ENCODE measurements at regions of chr1 and their contacts with region 1.

Region 1: DNA sequence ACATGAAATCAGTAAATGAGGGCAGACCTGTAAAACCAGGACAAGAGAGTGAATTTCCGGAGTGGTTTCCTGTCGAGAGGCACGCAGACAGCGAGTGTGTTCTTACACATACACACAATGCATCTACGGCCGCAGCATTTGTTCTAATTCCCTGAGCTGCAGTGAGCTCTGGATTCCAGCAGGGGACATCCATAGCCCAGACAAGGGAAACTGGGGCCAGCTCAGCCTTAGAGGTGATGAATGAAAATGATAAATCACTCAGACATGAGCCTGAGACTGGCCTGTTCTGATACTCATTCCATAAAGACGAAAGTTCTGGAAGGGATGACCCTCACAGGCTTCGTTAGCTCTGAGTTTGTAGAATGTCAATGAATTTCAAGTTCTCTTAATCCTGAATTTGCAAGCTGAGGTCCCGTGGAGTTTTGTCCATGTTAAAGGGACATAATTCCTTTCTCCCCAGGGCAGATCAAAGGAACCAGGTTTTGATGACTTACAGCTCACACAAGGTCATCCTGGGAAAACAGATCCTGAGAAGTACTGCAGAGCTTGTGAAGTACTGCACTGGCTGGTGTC is 207.9 kb upstream of the C1orf87 start:
- DNase-seq: peak; percentile 92
- H3K4me3 ChIP-seq: no peak overlapping the region
- H3K27ac ChIP-seq: peak overlapping the region; percentile 74
- H3K4me1 ChIP-seq: peaks cover 40% of the 10 kb centered on the region
- H3K27me3 ChIP-seq: no peaks in the 10 kb centered on the region
- CTCF ChIP-seq: peak; percentile 92 to 98
- POLR2A ChIP-seq: no peak

Region 2: DNA sequence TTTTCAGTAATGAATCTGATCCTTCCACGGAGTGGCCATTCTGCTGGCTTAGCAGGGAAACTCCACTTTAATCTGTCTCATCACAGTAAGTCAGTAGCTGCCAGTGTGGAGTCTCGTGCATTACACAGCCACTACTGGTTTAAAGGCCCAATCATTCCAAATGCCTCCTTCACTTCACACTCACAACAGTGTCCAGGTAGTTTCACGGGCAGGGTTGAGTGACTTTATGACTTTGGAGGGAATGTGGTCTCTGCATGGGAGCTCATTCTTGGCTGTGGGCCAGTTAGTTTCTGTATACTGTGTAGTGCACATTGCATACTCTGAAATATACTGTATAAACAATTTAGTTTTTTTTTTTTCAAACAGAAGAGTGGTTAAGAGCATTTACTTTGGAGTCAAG is 173.2 kb before region 1 on chr1:
- CTCF ChIA-PET with region 1: no interaction called
- POLR2A ChIA-PET with region 1: no interaction called
- dilution Hi-C with region 1: no loop called
- intact Hi-C with region 1: no loop called
- DNase-seq: no peak
- H3K4me3 ChIP-seq: no peak overlapping the region
- H3K27ac ChIP-seq: no peak overlapping the region
- H3K4me1 ChIP-seq: no peaks in the 10 kb centered on the region
- H3K27me3 ChIP-seq: no peaks in the 10 kb centered on the region
- CTCF ChIP-seq: no peak
- POLR2A ChIP-seq: no peak

Region 3: GRCh38 chr1:60160141-60160540 is 121.3 kb before region 1 on chr1:
- CTCF ChIA-PET with region 1: interaction called, 10 read pairs
- POLR2A ChIA-PET with region 1: no interaction called
- dilution Hi-C with region 1: no loop called
- intact Hi-C with region 1: loop called (anchors 1 kb)
- DNase-seq: no peak
- H3K4me3 ChIP-seq: no peak overlapping the region
- H3K27ac ChIP-seq: no peak overlapping the region
- H3K4me1 ChIP-seq: no peaks in the 10 kb centered on the region
- H3K27me3 ChIP-seq: no peaks in the 10 kb centered on the region
- CTCF ChIP-seq: no peak
- POLR2A ChIP-seq: no peak

Region 4: DNA sequence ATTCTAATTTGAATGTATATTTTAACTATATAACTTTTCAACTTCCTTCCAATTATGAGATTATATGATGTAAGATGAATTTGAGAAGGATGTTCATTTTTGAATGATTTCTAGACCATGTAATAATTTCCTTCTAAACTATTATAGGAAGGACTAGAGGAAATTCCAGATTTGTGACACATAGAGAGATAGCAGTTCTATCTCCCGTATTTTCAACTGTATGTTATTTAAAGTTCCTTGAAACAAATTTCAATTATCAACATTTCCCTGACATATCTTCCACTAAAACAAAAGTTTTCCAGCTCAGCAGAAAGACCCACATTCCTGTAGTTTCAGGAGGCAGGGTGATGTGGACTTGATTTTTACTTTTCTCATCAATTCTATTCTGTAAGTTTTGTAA is 188.8 kb after region 1 on chr1:
- CTCF ChIA-PET with region 1: interaction called, 3 read pairs
- POLR2A ChIA-PET with region 1: no interaction called
- dilution Hi-C with region 1: no loop called
- intact Hi-C with region 1: loop called (anchors 2 kb)
- DNase-seq: peak; percentile 66
- H3K4me3 ChIP-seq: no peak overlapping the region
- H3K27ac ChIP-seq: peak overlapping the region; percentile 82
- H3K4me1 ChIP-seq: peaks cover 27% of the 10 kb centered on the region
- H3K27me3 ChIP-seq: no peaks in the 10 kb centered on the region
- CTCF ChIP-seq: no peak
- POLR2A ChIP-seq: no peak

Region 5: DNA sequence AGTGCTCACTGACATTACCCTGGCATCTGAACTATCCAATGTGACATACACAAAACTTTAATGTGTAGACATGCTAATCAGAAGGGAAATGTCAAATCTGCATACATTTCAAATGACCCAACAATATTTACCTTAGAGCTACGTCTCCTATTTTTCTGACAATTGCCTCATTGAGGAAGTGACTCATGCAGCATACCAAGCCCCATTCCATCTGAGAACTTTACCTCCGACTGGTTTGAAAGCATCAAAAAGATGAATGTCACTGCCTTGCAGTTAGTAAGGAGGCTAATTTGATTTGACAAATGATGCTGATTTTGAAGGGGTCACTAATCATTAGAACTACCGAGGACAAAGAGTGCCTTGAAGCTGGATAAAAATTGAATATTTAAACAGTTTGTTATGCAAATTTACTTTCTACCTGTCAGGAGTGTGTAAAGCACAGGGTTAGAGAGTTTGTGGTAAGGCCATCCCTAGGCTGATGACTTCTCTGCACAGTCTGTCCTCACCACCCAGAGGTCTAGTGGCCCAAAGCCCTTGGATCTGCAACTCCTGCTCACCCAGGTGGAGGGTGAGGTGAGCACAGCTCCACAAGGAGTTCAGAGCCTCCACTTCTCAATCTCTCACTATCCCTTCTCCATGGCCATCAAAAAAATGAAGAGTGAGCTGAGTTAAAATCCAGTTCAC is 292.4 kb after region 1 on chr1:
- CTCF ChIA-PET with region 1: interaction called, 13 read pairs
- POLR2A ChIA-PET with region 1: no interaction called
- dilution Hi-C with region 1: no loop called
- intact Hi-C with region 1: loop called (anchors 1 kb)
- DNase-seq: peak; percentile 86
- H3K4me3 ChIP-seq: no peak overlapping the region
- H3K27ac ChIP-seq: peak overlapping the region; percentile 58
- H3K4me1 ChIP-seq: peaks cover 18% of the 10 kb centered on the region
- H3K27me3 ChIP-seq: no peaks in the 10 kb centered on the region
- CTCF ChIP-seq: no peak
- POLR2A ChIP-seq: peak; percentile 35

Region 6: GRCh38 chr1:60825593-60825992 is 544.1 kb after region 1 on chr1:
- CTCF ChIA-PET with region 1: interaction called, 9 read pairs
- POLR2A ChIA-PET with region 1: no interaction called
- dilution Hi-C with region 1: no loop called
- intact Hi-C with region 1: loop called (anchors 5 kb)
- DNase-seq: peak; percentile 80
- H3K4me3 ChIP-seq: no peak overlapping the region
- H3K27ac ChIP-seq: no peak overlapping the region
- H3K4me1 ChIP-seq: no peaks in the 10 kb centered on the region
- H3K27me3 ChIP-seq: no peaks in the 10 kb centered on the region
- CTCF ChIP-seq: peak; percentile 6 to 28
- POLR2A ChIP-seq: no peak

Region 7: GRCh38 chr1:60960891-60961461 is 679.5 kb after region 1 on chr1:
- CTCF ChIA-PET with region 1: interaction called, 12 read pairs
- POLR2A ChIA-PET with region 1: no interaction called
- dilution Hi-C with region 1: no loop called
- intact Hi-C with region 1: loop called (anchors 1 kb)
- DNase-seq: peak; percentile 96
- H3K4me3 ChIP-seq: no peak overlapping the region
- H3K27ac ChIP-seq: peak overlapping the region; percentile 98
- H3K4me1 ChIP-seq: peaks cover 68% of the 10 kb centered on the region
- H3K27me3 ChIP-seq: no peaks in the 10 kb centered on the region
- CTCF ChIP-seq: no peak
- POLR2A ChIP-seq: no peak

Region 8: DNA sequence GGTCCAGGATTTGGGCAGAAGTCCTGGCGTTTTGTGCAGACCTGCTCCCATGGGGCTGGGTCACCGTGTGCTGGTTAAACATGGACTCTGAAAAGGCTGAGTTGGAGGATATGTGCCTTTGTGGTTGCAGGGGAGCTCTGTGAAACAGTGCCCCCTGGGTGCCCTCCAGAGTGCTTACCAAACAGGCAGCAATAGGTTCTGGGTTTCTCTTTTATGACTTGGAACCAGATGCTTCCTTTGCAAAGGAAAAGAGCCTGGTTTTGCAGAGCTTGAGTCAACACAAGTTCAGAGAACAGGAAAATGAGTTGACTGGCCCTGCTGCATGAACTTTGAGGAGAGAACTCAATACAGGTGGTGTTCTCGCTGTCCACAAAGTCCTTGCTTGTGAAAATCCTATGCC is 1154.6 kb after region 1 on chr1:
- CTCF ChIA-PET with region 1: no interaction called
- POLR2A ChIA-PET with region 1: no interaction called
- dilution Hi-C with region 1: no loop called
- intact Hi-C with region 1: loop called (anchors 2 kb)
- DNase-seq: peak; percentile 98
- H3K4me3 ChIP-seq: no peak overlapping the region
- H3K27ac ChIP-seq: peak overlapping the region; percentile 94
- H3K4me1 ChIP-seq: peaks cover 42% of the 10 kb centered on the region
- H3K27me3 ChIP-seq: no peaks in the 10 kb centered on the region
- CTCF ChIP-seq: peak; percentile 80 to 81
- POLR2A ChIP-seq: peak; percentile 67